Caco-2 (cell line): ENCODE measurements at regions of chr7 and their contacts with region 1.

Region 1: DNA sequence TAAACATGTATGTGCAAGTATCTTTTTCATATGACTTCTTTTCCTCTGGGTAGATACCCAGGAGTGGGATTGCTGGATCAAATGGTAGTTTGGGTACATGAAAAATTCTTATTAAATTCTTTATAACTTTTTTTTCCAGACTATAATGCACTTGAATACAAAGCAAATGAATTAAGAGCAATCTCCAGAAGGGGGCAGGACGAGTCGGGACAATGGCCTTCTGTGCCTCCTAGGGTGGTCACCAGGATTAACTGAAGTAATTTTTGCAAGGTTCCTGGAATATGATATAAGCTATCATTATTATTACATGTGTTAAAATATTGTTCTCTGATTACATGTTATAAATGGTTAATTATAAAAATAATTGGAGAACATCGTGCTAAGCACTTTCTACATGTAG is 127.2 kb downstream of the PPP1R17 start:
- DNase-seq: peak in 1 of 2 experiments; percentile 17
- H3K4me3 ChIP-seq: no peak overlapping the region
- H3K4me3 Mint-ChIP-seq: no peak overlapping the region
- H3K27ac Mint-ChIP-seq: no peak overlapping the region
- H3K4me1 ChIP-seq: no peaks in the 10 kb centered on the region
- H3K4me1 Mint-ChIP-seq: no peaks in the 10 kb centered on the region
- H3K27me3 ChIP-seq: no peaks in the 10 kb centered on the region
- H3K27me3 Mint-ChIP-seq: peaks cover 14% of the 10 kb centered on the region
- CTCF ChIP-seq: peak in 1 of 2 experiments; percentile 31

Region 2: GRCh38 chr7:31875424-31875823 is 61.2 kb after region 1 on chr7:
- CTCF ChIA-PET with region 1: no interaction called
- POLR2A ChIA-PET with region 1: no interaction called
- intact Hi-C with region 1: no loop called
- DNase-seq: no peak
- H3K4me3 ChIP-seq: no peak overlapping the region
- H3K4me3 Mint-ChIP-seq: no peak overlapping the region
- H3K27ac Mint-ChIP-seq: no peak overlapping the region
- H3K4me1 ChIP-seq: no peaks in the 10 kb centered on the region
- H3K4me1 Mint-ChIP-seq: no peaks in the 10 kb centered on the region
- H3K27me3 ChIP-seq: no peaks in the 10 kb centered on the region
- H3K27me3 Mint-ChIP-seq: peaks cover 7% of the 10 kb centered on the region
- CTCF ChIP-seq: no peak

Region 3: GRCh38 chr7:32062150-32062549 is 248.0 kb after region 1 on chr7:
- CTCF ChIA-PET with region 1: no interaction called
- POLR2A ChIA-PET with region 1: no interaction called
- intact Hi-C with region 1: loop called (anchors 1 kb)
- DNase-seq: peak; percentile 59 to 74
- H3K4me3 ChIP-seq: no peak overlapping the region
- H3K4me3 Mint-ChIP-seq: no peak overlapping the region
- H3K27ac Mint-ChIP-seq: no peak overlapping the region
- H3K4me1 ChIP-seq: no peaks in the 10 kb centered on the region
- H3K4me1 Mint-ChIP-seq: no peaks in the 10 kb centered on the region
- H3K27me3 ChIP-seq: no peaks in the 10 kb centered on the region; the same call in 1 of the 2 replicates
- H3K27me3 Mint-ChIP-seq: peaks cover 7% of the 10 kb centered on the region
- CTCF ChIP-seq: peak; percentile 57 to 71

Region 4: GRCh38 chr7:32153006-32153405 is 338.8 kb after region 1 on chr7:
- CTCF ChIA-PET with region 1: no interaction called
- POLR2A ChIA-PET with region 1: no interaction called
- intact Hi-C with region 1: no loop called
- DNase-seq: no peak
- H3K4me3 ChIP-seq: no peak overlapping the region
- H3K4me3 Mint-ChIP-seq: no peak overlapping the region
- H3K27ac Mint-ChIP-seq: no peak overlapping the region
- H3K4me1 ChIP-seq: no peaks in the 10 kb centered on the region
- H3K4me1 Mint-ChIP-seq: no peaks in the 10 kb centered on the region
- H3K27me3 ChIP-seq: no peaks in the 10 kb centered on the region
- H3K27me3 Mint-ChIP-seq: peaks cover 5% of the 10 kb centered on the region
- CTCF ChIP-seq: no peak

Region 5: DNA sequence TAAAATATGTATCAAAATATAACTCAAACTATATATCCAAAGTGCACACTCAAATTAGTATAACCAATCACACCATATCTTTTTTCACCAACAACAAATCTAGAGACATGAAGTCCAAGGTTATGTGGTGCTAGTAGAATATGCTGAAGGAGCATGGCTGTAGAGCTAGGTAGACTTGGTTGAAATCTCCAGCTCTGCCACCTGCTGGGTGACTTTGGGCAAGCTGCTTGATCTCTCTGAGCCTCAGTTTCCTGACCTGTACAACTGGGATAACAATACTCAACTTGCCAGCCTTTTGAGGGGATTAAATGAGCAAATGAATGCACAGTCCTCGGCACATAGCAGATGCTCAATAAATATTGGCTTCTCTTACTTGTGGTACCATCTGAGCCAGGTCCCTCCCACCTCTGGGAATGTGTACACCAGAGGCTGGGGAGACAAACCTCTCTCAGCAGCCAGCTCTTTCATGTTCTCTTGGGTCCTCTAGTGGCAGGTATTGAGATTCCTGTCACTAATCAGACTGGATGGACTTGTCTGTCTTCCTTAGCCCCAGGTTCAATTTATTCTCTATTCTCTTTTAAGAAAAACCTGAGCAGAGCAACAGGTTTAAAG is 350.3 kb after region 1 on chr7:
- CTCF ChIA-PET with region 1: interaction called, 3 read pairs
- POLR2A ChIA-PET with region 1: no interaction called
- intact Hi-C with region 1: loop called (anchors 1 kb)
- DNase-seq: peak; percentile 51 to 56
- H3K4me3 ChIP-seq: no peak overlapping the region
- H3K4me3 Mint-ChIP-seq: no peak overlapping the region
- H3K27ac Mint-ChIP-seq: no peak overlapping the region
- H3K4me1 ChIP-seq: no peaks in the 10 kb centered on the region; the same call in 1 of the 2 replicates
- H3K4me1 Mint-ChIP-seq: no peaks in the 10 kb centered on the region
- H3K27me3 ChIP-seq: no peaks in the 10 kb centered on the region
- H3K27me3 Mint-ChIP-seq: no peaks in the 10 kb centered on the region
- CTCF ChIP-seq: peak; percentile 50 to 56